HAP-1 (cell line): ENCODE measurements at regions of chr10 and their contacts with region 1.

Region 1: DNA sequence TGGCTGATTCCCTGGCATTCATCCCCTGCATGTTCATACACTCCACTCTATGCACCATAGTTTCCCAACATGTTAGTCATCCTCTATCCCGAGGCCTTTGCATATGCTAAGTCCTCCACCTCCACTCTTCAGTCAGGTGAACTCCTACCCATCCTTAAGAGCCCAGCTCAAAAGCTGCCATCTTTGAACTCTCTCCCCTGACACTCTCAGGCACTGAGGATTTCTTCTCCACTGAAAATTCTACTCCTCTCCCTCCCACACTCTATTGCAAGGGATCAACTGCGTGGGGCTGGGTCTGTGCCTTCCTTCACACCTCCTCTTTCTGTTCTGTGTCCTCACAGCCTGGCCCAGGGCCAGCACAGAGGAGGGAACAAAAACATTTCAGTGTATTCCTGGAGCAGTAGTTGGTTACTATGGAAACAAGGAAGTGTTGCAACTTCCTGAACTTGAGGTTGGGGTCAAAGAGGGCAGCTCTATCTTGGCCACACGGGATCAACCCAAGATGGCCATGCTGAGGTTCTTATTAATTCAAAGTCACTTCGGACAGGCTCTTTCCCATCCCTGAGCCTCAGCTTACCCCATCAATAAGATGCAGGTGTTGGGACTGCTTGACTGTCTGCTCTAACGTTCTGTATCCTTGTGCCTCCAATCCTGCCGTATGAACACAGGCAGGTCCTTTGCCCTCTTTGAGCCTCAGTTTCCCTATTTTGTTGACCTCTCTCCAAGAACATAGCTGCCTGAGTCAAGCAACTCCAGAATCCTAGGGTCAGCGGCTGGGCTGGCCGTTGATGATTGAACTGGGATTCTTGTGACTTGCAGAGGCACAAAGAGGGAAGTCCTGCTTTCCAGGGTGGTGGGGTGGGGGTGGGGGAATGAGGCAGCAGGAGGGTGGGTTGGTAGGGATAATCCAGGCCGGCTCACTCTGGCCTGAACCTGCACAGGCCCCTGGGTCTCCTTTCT is 15.5 kb downstream of the ZMIZ1 start:
- DNase-seq: peak; percentile 56 to 70
- H3K4me3 ChIP-seq: no peak overlapping the region
- H3K4me1 ChIP-seq: peaks cover 10% of the 10 kb centered on the region
- H3K27me3 ChIP-seq: no peaks in the 10 kb centered on the region

Region 2: DNA sequence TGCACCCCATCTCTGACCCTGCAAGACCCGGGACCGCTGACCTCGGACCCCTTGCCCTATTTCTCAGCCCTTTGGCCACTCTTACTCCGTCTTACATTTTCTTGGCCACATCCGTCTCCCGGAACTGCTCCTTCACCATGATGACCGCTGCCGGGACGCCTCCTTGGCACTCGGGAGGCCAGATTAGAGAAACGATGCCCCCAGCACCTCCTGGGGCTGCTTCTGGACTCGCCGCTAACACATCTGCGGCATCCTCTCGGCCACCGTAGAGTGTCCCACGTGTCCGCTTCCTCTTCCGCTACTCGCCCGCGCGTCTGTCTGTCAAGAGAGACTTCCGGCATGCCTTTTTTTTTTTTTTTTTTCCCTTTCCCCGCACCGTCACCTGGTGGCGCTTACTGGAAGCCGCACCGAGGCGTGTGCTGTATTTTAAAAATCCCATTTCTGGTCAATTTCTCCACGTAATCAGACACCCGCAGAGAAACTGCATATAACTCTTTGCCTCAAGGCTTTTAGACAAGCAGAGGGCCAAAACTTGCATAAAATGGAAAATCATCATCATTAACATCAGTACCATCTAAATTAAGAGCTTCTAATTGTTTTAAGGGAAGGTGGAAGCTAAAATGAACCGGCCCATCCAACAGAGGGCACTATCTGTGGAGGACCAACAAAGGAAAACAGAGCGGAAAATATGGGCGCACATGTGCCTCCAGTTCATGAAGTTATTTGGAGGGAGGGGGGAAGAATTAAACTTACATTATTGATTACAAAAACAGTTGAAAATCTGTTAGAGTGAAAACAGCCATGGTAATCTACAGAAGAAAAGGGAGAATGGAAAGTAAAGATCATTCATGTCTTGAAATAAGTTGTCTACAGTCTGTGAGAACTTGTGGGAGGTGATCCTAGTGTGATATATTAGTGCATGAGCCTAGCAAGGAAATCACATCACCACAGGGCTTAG is 1054.7 kb before region 1 on chr10 and contains the start of gene POLR3A:
- in situ Hi-C with region 1: loop called (anchors 25 kb)
- DNase-seq: peak; percentile 85 to 95
- H3K4me3 ChIP-seq: peak within 1 kb of the TSS; percentile 98
- H3K4me1 ChIP-seq: peaks cover 12% of the 10 kb centered on the region
- H3K27me3 ChIP-seq: no peaks in the 10 kb centered on the region

Region 3: DNA sequence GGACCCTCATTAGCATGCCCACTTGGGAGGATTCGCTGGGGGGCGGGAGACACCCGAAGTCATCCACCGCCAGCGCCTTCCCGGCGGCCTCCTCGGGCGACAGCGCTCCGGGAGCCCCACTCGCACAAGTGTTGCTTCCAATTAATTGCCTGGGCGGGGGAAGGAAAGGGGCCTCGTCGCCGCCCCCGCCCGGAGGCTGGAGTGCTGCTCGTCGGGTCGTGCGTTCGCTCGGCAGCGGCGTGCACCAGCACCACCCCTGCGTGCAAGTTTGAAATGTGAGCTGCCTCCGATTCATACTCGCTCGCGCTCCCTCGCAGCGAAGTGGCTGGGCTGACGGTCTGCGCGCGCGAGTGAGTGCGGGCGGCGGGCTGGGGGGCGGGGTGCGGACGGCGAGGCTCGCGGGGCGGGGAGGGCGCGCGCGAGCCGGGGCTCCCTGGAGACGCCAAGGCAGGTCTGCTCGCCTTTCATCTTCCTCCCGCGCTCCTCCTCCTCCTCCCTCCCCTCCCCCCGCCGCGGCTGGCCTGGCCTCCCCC is 158.4 kb after region 1 on chr10:
- in situ Hi-C with region 1: no loop called
- DNase-seq: no peak
- H3K4me3 ChIP-seq: no peak overlapping the region
- H3K4me1 ChIP-seq: peaks cover 31% of the 10 kb centered on the region
- H3K27me3 ChIP-seq: no peaks in the 10 kb centered on the region

Region 4: DNA sequence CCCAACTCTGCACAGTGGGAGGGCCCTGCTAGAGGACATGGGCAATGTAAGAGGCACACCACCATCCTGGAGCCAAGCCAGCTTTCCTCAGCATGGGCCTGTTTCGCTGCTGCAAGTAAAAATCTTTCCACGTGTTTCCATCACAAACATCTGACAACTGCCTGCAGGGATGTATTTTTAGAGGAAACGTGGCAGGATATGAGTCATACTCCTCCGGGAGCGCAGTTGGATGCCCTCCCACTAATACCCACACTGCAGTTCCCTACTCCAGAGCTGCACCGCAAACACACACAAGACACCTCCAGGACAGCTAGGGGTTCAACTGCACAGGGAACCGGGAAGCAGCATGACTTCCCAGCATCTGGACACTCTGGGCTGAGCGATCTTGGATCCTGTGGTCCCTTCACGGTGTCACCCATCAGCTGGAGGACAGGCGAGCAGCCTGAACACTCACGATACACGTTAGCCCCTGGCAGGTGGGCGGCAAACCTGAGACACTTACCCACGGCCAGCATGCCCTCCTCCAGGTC is 1074.4 kb after region 1 on chr10:
- in situ Hi-C with region 1: no loop called
- DNase-seq: no peak
- H3K4me3 ChIP-seq: no peak overlapping the region
- H3K4me1 ChIP-seq: no peaks in the 10 kb centered on the region
- H3K27me3 ChIP-seq: no peaks in the 10 kb centered on the region